Psoas muscle (tissue), 8 donors: ENCODE measurements at regions of chr22 and their contacts with region 1.

Region 1: GRCh38 chr22:38843201-38843715 is 570 bp downstream of the NPTXR start:
- DNase-seq: peak; percentile 46 to 71
- ATAC-seq: peak; percentile 47 to 64 (median 60)
- H3K4me3 ChIP-seq: peak overlapping the region; percentile 58
- H3K27ac ChIP-seq: no peak overlapping the region
- H3K4me1 ChIP-seq: peaks cover 3% of the 10 kb centered on the region
- H3K27me3 ChIP-seq: peaks cover 0 to 58% (median 15%) of the 10 kb centered on the region in 3 donors
- CTCF ChIP-seq: peak; percentile 19

Region 2: GRCh38 chr22:38766076-38766777 is 77.0 kb before region 1 on chr22:
- intact Hi-C with region 1: loop called (anchors 5 to 10 kb)
- DNase-seq: peak; percentile 71 to 84
- ATAC-seq: peak; percentile 75 to 87 (median 84)
- H3K4me3 ChIP-seq: no peak overlapping the region
- H3K27ac ChIP-seq: no peak overlapping the region
- H3K4me1 ChIP-seq: peaks cover 17% of the 10 kb centered on the region
- H3K27me3 ChIP-seq: no peaks in the 10 kb centered on the region
- CTCF ChIP-seq: peak; percentile 76

Region 3: GRCh38 chr22:38774496-38775166 is 68.6 kb before region 1 on chr22:
- intact Hi-C with region 1: loop called (anchors 5 to 10 kb)
- DNase-seq: no peak
- ATAC-seq: no peak
- H3K4me3 ChIP-seq: no peak overlapping the region
- H3K27ac ChIP-seq: no peak overlapping the region
- H3K4me1 ChIP-seq: no peaks in the 10 kb centered on the region
- H3K27me3 ChIP-seq: no peaks in the 10 kb centered on the region
- CTCF ChIP-seq: no peak

Region 4: DNA sequence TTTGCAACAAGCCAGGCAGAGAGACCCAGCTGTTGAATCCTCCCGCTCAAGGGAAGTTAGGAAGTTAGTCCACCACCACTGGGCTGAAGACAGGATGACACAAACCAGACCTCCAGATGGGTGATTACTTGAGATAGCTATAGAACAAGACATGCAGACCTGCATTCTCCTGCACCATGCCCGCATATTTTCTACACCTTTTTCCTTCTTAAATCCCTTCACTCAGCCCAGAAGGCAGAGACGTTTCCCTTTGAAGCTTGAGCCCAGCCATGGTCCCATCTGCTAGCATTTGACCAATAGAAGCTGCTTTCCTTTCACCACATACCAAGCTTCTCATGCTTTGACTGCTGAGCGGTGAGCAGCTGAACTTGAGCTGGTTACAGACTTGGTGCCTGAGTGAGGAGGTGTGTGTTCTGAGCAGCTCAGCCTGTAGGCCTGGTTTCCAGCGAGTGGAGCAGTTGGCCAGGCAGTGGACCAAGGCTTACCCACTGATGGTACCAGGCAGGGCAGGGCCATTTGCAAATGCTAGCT is 57.9 kb after region 1 on chr22:
- intact Hi-C with region 1: no loop called
- DNase-seq: no peak
- ATAC-seq: no peak
- H3K4me3 ChIP-seq: no peak overlapping the region
- H3K27ac ChIP-seq: no peak overlapping the region
- H3K4me1 ChIP-seq: no peaks in the 10 kb centered on the region
- H3K27me3 ChIP-seq: peaks cover 0 to 6% (median 0%) of the 10 kb centered on the region in 3 donors
- CTCF ChIP-seq: no peak